AG04449 (cell line): ENCODE measurements at regions of chr17 and their contacts with region 1.

Region 1: DNA sequence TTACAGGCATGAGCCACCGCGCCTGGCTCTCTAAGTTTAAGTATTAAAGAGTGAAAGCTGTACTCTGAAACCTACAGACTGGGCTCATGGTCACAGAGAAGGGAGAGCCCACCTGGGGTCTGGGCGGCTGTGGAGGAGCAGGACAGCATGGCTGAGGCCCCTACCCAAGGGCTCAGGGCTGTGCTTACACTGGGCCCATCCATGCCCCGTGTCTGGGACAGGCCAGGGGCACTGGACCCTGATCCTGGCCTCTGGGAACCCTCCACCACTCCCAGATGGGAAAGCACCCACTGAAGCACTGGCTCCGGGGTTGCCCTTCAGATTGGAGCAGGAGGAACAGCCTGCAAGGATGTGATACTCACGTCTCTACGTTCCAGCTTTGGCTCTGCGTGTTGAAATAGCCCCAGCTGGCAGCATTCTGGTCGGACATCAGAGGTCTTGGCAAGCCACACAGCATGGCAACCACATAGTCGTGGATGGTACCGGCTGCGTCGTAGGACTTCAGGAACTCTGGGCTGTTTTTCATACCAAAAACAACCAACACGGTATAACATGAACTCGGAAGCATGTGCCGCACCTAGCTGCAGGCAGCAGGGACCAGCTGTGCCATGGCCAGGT is 13.0 kb downstream of the SHPK start:
- DNase-seq: no peak
- H3K4me3 ChIP-seq: no peak overlapping the region
- CTCF ChIP-seq: no peak

Region 2: DNA sequence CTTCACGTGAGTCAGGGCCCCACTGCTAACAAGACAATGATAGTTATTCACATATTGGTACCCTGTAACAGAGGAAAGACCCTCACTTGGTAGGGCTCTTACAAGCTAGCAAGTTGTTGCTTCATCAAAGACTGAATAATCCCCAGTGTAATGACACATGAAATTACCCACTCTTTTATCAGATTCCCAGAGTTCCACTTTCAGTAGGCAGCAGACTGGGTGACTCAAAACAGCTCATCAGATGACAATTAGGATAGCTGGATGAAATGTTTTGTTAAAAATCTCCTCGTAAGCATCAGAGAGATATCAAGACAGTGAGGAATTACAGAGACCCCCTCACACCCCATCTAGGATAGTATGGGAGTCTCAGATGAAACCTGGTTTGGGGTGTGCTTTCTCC is 182.6 kb before region 1 on chr17:
- CTCF ChIA-PET with region 1: no interaction called
- POLR2A ChIA-PET with region 1: no interaction called
- DNase-seq: no peak
- H3K4me3 ChIP-seq: no peak overlapping the region
- CTCF ChIP-seq: no peak

Region 3: GRCh38 chr17:3602499-3602898 is 20.6 kb before region 1 on chr17:
- CTCF ChIA-PET with region 1: interaction called, 13 read pairs
- POLR2A ChIA-PET with region 1: no interaction called
- DNase-seq: no peak
- H3K4me3 ChIP-seq: no peak overlapping the region
- CTCF ChIP-seq: no peak

Region 4: DNA sequence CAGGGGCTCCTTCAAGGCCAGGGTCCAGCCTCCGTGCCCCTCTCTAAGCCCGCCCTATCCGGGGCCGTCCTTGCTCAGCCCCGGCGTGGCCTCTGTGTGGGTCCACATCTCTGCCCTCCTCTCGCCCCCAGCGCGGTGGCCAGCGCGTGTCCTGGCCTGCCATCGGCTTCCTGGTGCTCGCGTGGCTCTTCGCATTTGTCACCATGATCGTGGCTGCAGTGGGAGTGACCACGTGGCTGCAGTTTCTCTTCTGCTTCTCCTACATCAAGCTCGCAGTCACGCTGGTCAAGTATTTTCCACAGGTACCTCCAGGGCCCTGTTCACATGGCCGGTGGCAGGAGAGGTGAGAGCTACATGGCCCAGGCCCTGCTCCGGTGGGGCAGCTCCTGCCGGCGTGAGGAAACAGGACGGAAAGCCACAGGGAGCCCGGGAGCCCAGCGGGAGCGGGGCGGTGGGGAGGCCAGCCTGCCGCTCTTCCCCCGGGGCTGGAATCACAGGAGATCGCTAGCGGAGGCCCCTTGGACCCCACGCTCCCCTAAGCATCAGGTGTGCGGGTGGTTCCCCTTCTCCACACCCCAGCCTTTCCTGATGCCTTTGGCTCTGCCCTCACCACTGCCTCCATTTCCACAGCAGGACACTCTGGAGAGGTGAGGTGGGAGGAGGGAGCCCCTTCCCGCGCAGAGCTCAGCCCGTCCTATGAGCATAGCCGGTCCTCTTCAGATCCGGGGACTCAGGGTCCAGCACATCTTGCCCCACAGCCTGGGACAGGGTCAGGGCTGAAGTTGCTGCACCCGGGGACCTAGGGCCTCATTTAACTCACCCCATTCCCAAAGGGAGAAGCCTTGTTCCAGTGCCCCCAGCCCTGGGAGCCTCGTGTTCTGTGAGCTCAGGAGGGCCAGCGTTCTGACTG is 35.0 kb after region 1 on chr17:
- CTCF ChIA-PET with region 1: no interaction called
- POLR2A ChIA-PET with region 1: no interaction called
- DNase-seq: no peak
- H3K4me3 ChIP-seq: no peak overlapping the region
- CTCF ChIP-seq: no peak

Region 5: DNA sequence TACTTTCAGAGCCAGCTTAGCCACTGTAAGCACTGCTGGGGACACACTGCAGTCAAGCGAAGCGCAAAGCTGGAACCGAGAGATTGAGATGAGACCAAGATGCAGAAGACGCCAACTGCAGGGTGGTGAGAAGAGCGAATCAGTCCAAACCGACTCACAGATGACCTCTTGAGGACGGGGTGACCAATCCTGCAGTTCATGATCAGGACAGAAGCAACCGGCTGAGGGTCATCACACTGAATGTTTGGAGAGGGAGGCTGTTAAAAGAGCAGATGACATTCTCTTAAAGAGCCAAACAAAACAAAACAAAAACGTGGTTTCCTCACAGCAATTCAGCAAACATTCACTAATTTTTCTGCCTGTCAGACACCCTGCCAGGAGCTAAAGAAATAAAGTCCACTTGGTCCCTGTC is 109.1 kb after region 1 on chr17:
- CTCF ChIA-PET with region 1: no interaction called
- POLR2A ChIA-PET with region 1: no interaction called
- DNase-seq: no peak
- H3K4me3 ChIP-seq: no peak overlapping the region
- CTCF ChIP-seq: no peak